ENCODE measurements at regions of chr5 and their contacts with region 1.

Region 1: DNA sequence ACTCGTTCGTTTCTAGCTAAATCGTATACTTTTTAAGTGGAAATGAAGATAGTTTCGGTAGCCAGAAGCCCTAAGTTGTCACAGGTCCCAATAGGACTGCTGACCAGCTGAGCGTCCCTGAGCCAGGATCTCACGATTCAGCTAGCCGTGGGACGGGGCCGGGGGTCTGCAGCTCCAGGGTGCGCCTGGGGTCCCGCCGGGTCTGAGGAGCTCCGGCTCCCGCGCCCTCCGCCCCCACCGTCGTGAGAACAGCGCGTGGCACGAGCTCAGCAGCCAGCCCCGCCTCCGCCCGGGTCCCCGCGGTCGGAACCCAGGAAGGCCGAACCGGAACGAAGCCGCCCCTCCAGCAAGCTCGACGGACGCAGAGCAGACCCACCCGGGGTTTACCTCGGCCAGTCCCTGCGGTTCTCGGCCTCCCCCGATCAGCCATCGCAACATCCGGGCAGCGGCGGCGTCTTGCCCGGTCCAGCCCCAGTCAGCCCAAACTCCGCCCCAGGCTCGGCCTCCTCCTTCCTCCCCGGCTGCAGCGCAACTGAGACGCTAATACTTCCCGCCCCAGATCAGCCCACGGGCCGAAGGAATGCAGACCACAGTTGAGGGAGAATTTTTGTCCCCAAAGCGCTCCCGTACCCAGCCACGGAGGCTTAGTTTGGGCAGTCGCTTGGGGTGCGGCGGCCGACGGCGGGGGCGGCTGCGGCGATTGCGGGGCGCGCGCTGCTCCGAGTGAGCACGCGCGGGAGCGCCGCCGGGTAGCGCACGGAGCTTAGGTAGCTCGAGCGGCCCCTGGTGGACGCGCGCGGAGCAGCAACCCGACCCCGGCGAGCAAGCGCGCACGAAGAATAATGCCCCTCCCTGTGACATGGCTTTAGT is at the start of gene WDR41:
- DNase-seq: peak; percentile 92
- H3K4me3 ChIP-seq: peak within 1 kb of the TSS; percentile 92
- H3K27ac ChIP-seq: peak within 1 kb of the TSS; percentile 87
- H3K4me1 ChIP-seq: peaks cover 20% of the 10 kb centered on the region
- CTCF ChIP-seq: peak; percentile 83
- total RNA-seq, gene WDR41: 47.0 and 75.1 TPM in 2 replicates

Region 2: GRCh38 chr5:77086689-77087483 is 405.1 kb before region 1 on chr5 and contains the start of gene ZBED3:
- CTCF ChIA-PET with region 1: no interaction called
- POLR2A ChIA-PET with region 1: no interaction called
- intact Hi-C with region 1: loop called (anchors 2 kb)
- DNase-seq: peak; percentile 90
- H3K4me3 ChIP-seq: peak within 1 kb of the TSS; percentile 76
- H3K27ac ChIP-seq: peak within 1 kb of the TSS; percentile 78
- H3K4me1 ChIP-seq: peaks cover 31% of the 10 kb centered on the region
- CTCF ChIP-seq: peak; percentile 69
- total RNA-seq, gene ZBED3: 1.2 and 3.6 TPM in 2 replicates

Region 3: GRCh38 chr5:77143998-77144836 is 347.8 kb before region 1 on chr5:
- CTCF ChIA-PET with region 1: no interaction called
- POLR2A ChIA-PET with region 1: no interaction called
- intact Hi-C with region 1: loop called (anchors 1 kb)
- DNase-seq: peak; percentile 66
- H3K4me3 ChIP-seq: no peak overlapping the region
- H3K27ac ChIP-seq: no peak overlapping the region
- H3K4me1 ChIP-seq: no peaks in the 10 kb centered on the region
- CTCF ChIP-seq: peak; percentile 93

Region 4: GRCh38 chr5:77775790-77776553 is 284.0 kb after region 1 on chr5 and contains the start of gene TBCA:
- CTCF ChIA-PET with region 1: no interaction called
- POLR2A ChIA-PET with region 1: no interaction called
- intact Hi-C with region 1: loop called (anchors 1 kb)
- DNase-seq: peak; percentile 94
- H3K4me3 ChIP-seq: peak within 1 kb of the TSS; percentile 77
- H3K27ac ChIP-seq: peak within 1 kb of the TSS; percentile 80
- H3K4me1 ChIP-seq: peaks cover 30% of the 10 kb centered on the region
- CTCF ChIP-seq: peak; percentile 47; the same call in 1 of the 2 replicates
- total RNA-seq, gene TBCA: 174 and 214 TPM in 2 replicates